Activated T-helper 2 cell treated with anti-CD3 and anti-CD28 coated beads, Interferon-gamma antibody, Interleukin-2, Interleukin-4, amounts not matched to agents 10 μg/mL and 5 μg/mL and 100 μg/mL, durations not matched to agents 14 hours and 24 hours and 36 hours (primary cell): ENCODE measurements at regions of chr7 and their contacts with region 1.

Region 1: DNA sequence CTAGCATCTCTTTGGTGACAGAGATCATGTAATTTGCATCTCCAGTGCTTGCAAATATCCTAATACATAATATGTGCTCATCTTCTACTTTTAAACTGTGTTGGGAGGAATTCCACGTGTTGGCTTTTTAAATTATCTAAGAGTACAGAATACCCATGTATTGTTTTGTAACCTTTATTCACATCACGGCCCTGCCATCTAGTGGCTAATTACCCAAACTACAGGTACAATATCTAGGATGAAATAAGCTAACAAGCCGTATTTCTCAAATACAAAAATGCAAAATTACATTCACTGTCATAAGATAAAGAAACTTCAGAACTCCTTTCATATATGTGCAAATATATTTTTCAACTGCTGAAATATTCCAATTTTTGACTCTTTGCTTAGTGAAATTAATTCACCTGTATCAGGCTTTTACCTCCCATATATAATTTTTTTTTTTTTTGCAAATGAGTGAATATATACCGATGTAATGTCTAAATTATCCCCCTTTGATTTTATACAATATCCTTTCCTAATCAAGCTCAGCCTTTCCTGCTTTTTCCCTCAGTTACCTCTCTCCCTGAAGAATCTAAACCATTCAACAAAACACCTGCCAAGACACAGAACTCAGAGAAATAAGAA is 30.3 kb upstream of the LSM8 start:
- DNase-seq: no peak
- H3K4me3 Mint-ChIP-seq: no peak overlapping the region
- H3K27ac Mint-ChIP-seq: no peak overlapping the region
- H3K4me1 Mint-ChIP-seq: no peaks in the 10 kb centered on the region
- H3K27me3 Mint-ChIP-seq: peaks cover 20% of the 10 kb centered on the region

Region 2: GRCh38 chr7:117458977-117459583 is 694.6 kb before region 1 on chr7:
- intact Hi-C with region 1: loop called (anchors 2 kb)
- DNase-seq: no peak
- H3K4me3 Mint-ChIP-seq: no peak overlapping the region
- H3K27ac Mint-ChIP-seq: no peak overlapping the region
- H3K4me1 Mint-ChIP-seq: no peaks in the 10 kb centered on the region
- H3K27me3 Mint-ChIP-seq: peaks cover 2% of the 10 kb centered on the region

Region 3: GRCh38 chr7:117750612-117751563 is 402.8 kb before region 1 on chr7:
- intact Hi-C with region 1: loop called (anchors 2 kb)
- DNase-seq: no peak
- H3K4me3 Mint-ChIP-seq: no peak overlapping the region
- H3K27ac Mint-ChIP-seq: no peak overlapping the region
- H3K4me1 Mint-ChIP-seq: no peaks in the 10 kb centered on the region
- H3K27me3 Mint-ChIP-seq: no peaks in the 10 kb centered on the region